Heart right ventricle (tissue), 16 donors: ENCODE measurements at regions of chr17 and their contacts with region 1.

Region 1: DNA sequence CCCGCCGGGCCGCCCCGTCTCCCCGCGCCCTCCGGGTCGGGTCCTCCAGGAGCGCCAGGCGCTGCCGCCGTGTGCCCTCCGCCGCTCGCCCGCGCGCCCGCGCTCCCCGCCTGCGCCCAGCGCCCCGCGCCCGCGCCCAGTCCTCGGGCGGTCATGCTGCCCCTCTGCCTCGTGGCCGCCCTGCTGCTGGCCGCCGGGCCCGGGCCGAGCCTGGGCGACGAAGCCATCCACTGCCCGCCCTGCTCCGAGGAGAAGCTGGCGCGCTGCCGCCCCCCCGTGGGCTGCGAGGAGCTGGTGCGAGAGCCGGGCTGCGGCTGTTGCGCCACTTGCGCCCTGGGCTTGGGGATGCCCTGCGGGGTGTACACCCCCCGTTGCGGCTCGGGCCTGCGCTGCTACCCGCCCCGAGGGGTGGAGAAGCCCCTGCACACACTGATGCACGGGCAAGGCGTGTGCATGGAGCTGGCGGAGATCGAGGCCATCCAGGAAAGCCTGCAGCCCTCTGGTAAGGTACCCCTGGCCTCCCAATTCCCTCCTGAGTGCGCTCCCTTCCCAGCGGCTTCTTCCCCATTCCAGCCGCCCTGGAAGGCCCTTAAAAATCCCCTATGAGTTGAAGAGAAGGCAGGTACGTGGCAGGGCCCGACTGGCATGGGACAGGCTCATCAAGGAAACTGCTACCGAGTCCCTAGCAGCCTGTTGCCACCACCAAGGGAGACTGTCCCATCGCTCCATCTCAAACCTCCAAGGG is 505 bp downstream of the IGFBP4 start:
- DNase-seq: peak; percentile 77 to 86
- ATAC-seq: peak; percentile 22 to 61 (median 42)
- H3K4me3 ChIP-seq: peak overlapping the region; percentile 66 to 89 (median 82)
- H3K27ac ChIP-seq: peak overlapping the region; percentile 89 to 99 (median 96)
- H3K4me1 ChIP-seq: peaks cover 16 to 61% (median 50%) of the 10 kb centered on the region in 9 donors
- H3K27me3 ChIP-seq: peaks cover 0 to 15% (median 0%) of the 10 kb centered on the region in 7 donors
- CTCF ChIP-seq: peak; percentile 16 to 57 (median 45)

Region 2: GRCh38 chr17:40378966-40379365 is 64.8 kb before region 1 on chr17:
- intact Hi-C with region 1: no loop called
- DNase-seq: no peak
- ATAC-seq: no peak
- H3K4me3 ChIP-seq: no peak overlapping the region
- H3K27ac ChIP-seq: no peak overlapping the region
- H3K4me1 ChIP-seq: no peaks in the 10 kb centered on the region
- H3K27me3 ChIP-seq: peaks cover 0 to 7% (median 0%) of the 10 kb centered on the region in 7 donors
- CTCF ChIP-seq: no peak

Region 3: DNA sequence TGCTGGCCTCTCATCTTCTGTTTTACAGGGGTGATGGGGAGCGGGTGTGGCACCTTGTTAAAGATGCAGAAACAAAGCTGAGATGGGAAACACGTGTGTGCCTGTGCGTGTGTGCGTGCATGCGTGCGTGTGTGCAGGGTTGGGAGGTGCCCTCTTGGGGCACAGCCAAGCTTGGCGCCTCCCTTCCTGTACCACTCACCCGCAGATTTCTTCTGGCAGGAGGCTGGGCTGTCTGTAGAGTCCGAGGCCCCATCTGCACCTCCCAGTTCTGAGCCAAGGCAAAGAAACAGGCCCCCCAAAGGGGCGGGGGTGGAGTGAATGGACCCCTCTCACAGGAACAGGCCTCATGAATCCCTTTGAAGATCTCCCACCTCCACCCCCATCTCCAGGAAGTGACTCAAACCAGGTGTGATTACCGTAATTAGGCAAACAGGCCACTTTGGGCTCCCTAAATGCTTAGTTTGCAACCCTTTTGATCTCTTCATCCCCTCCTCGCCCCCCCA is 36.8 kb after region 1 on chr17:
- intact Hi-C with region 1: loop called (anchors 1 to 5 kb)
- DNase-seq: peak in 1 of 2 donors; percentile 37
- ATAC-seq: peak in 6 of 8 donors; percentile 13 to 54 (median 40)
- H3K4me3 ChIP-seq: no peak overlapping the region
- H3K27ac ChIP-seq: peak overlapping the region in 1 of 10 donors; percentile 82
- H3K4me1 ChIP-seq: peaks cover 0 to 42% (median 6%) of the 10 kb centered on the region in 9 donors
- H3K27me3 ChIP-seq: no peaks in the 10 kb centered on the region
- CTCF ChIP-seq: no peak

Region 4: DNA sequence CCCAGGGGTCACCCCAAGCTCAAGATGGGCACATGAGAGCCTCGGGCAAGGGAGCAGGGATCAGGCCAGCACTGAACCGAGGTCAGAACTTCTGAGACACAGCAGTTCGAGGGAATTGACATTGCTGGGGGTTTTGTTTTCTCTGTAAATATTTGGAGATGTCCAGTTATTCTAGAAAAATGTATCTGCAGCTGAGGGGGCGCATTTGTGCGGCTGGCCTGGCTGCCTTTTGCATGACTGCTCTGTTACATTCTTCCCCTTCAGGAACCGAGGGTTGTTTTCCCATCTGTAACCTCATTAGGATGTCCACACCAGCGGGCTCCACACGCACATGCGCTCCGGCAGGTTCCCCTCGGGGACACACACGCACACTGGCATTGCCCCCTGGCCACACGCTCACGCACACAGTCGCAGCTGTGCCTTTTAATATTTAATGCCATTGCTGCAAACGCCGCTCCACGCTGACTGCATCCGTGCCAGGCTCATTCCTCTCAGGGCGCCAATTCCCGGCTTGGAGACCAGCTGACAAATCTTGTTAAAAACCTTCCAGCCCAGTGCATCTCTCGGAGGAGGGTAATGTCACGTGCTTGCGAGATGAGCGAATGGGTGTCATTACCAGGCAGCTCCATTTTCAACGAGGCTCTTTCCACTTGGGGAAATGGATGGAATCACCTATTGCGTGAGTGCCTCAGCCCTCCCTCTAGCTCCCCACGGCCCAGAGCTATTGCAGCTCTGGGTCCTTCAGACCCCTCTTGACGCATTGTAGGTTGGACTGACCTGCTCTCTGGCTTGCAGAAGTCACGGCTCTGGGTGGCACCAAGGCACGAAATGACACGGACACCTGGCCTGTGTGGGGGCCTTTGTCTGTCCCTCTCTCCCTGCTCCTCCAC is 108.4 kb after region 1 on chr17:
- intact Hi-C with region 1: loop called in 5 of 10 experiments (anchors 5 kb)
- DNase-seq: no peak
- ATAC-seq: peak in 2 of 8 donors; percentile 13 to 14
- H3K4me3 ChIP-seq: no peak overlapping the region
- H3K27ac ChIP-seq: peak overlapping the region; percentile 37 to 94 (median 88)
- H3K4me1 ChIP-seq: peaks cover 31 to 96% (median 81%) of the 10 kb centered on the region in 9 donors
- H3K27me3 ChIP-seq: no peaks in the 10 kb centered on the region
- CTCF ChIP-seq: no peak

Region 5: DNA sequence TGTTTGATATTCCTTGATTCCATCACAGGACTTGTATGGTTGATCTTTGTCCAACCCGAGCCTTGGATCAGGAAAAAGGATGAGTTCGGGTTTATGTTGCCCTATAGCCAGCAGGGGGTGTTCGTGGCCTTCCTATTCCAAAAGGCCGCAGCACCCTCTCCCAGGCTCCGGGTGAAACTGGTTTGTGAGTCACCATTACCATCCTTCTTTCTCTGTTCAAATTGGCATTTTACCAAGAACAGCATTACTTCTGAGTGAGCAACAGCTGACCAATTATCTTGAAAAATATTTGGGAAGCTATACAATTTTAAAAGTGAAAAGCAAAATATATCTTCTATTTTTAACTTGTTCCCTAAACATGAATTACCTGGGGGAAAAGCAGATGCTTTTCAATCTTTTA is 465.6 kb after region 1 on chr17:
- intact Hi-C with region 1: no loop called
- DNase-seq: peak; percentile 40 to 69
- ATAC-seq: peak; percentile 78 to 96 (median 86)
- H3K4me3 ChIP-seq: no peak overlapping the region
- H3K27ac ChIP-seq: no peak overlapping the region
- H3K4me1 ChIP-seq: peaks cover 0 to 33% (median 0%) of the 10 kb centered on the region in 9 donors
- H3K27me3 ChIP-seq: peaks cover 0 to 26% (median 22%) of the 10 kb centered on the region in 7 donors
- CTCF ChIP-seq: peak; percentile 41 to 85 (median 79)

Region 6: GRCh38 chr17:41688699-41689496 is 1245.1 kb after region 1 on chr17 and contains the start of gene EIF1:
- intact Hi-C with region 1: loop called in 1 of 10 experiments (anchors 10 kb)
- DNase-seq: peak; percentile 100
- ATAC-seq: peak; percentile 89 to 96 (median 94)
- H3K4me3 ChIP-seq: peak within 1 kb of the TSS; percentile 62 to 99 (median 84)
- H3K27ac ChIP-seq: peak within 1 kb of the TSS; percentile 97 to 100 (median 100)
- H3K4me1 ChIP-seq: peaks cover 11 to 45% (median 38%) of the 10 kb centered on the region in 9 donors
- H3K27me3 ChIP-seq: no peaks in the 10 kb centered on the region
- CTCF ChIP-seq: no peak
- total RNA-seq, gene EIF1: 1,115 to 1,330 (median 1,284) TPM